HepG2 (cell line): ENCODE measurements at regions of chr15 and their contacts with region 1.

Region 1: DNA sequence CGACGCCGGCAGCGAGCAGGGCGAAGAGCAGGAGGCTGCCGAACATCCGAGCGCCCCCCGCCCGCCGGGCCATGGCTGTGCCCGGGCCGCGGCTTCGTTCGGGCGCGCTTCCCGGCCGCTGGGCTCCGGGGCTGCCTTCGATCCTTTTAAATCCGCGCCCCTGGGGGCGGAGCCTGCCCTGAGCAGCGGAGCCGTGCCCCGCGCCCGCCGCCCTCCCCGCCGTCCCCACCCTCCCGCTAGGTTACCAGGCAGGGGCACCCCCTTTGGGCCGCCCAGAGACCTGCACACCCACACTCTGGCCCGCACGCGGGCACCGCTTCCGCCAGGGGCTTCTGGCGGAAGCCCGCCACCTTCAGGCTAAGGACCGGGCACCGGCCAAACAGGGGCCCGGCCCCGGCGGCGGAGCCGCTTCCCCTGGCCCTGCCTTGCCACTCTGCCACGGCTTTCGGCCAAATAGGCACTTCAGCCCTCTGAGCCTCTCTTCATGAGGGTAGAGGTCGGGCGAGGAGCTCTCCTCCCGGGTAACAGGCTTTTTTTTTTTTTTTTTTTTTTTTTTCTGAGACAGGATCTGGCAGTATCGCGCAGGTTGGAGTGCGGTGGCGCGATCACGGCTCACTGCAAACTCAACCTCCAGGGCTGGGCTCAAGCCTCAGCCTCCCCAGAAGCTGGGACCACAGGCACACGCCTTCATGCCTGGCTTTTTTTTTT is at the start of gene NMB:
- DNase-seq: peak; percentile 81
- ATAC-seq: peak; percentile 85
- H3K4me3 ChIP-seq: peak within 1 kb of the TSS; percentile 52 to 75 (median 57)
- H3K27ac ChIP-seq: peak within 1 kb of the TSS; percentile 78
- H3K4me1 ChIP-seq: peaks cover 52% of the 10 kb centered on the region
- H3K27me3 ChIP-seq: no peaks in the 10 kb centered on the region; a peak in 1 of 5 replicates
- CTCF ChIP-seq: peak; percentile 80
- EP300 ChIP-seq: no peak
- POLR2A ChIP-seq: peak; percentile 54 to 67
- RAD21 ChIP-seq: peak; percentile 84
- total RNA-seq, gene NMB: 15.5 and 25.4 TPM in 2 replicates

Region 2: GRCh38 chr15:84600851-84601838 is 57.1 kb before region 1 on chr15 and contains the start of gene ZSCAN2:
- CTCF ChIA-PET with region 1: interaction called, 34 read pairs
- POLR2A ChIA-PET with region 1: interaction called, 27 read pairs
- in situ Hi-C with region 1: no loop called
- intact Hi-C with region 1: loop called (anchors 1 kb)
- DNase-seq: peak; percentile 91
- ATAC-seq: peak; percentile 96
- H3K4me3 ChIP-seq: peak within 1 kb of the TSS; percentile 78 to 98 (median 86)
- H3K27ac ChIP-seq: peak within 1 kb of the TSS; percentile 86
- H3K4me1 ChIP-seq: peaks cover 60% of the 10 kb centered on the region
- H3K27me3 ChIP-seq: no peaks in the 10 kb centered on the region; a peak in 1 of 5 replicates
- CTCF ChIP-seq: peak; percentile 22; the same call in 1 of the 2 replicates
- EP300 ChIP-seq: no peak
- POLR2A ChIP-seq: peak; percentile 70 to 79
- RAD21 ChIP-seq: peak; percentile 48
- total RNA-seq, gene ZSCAN2: 21.5 and 23.7 TPM in 2 replicates

Region 3: DNA sequence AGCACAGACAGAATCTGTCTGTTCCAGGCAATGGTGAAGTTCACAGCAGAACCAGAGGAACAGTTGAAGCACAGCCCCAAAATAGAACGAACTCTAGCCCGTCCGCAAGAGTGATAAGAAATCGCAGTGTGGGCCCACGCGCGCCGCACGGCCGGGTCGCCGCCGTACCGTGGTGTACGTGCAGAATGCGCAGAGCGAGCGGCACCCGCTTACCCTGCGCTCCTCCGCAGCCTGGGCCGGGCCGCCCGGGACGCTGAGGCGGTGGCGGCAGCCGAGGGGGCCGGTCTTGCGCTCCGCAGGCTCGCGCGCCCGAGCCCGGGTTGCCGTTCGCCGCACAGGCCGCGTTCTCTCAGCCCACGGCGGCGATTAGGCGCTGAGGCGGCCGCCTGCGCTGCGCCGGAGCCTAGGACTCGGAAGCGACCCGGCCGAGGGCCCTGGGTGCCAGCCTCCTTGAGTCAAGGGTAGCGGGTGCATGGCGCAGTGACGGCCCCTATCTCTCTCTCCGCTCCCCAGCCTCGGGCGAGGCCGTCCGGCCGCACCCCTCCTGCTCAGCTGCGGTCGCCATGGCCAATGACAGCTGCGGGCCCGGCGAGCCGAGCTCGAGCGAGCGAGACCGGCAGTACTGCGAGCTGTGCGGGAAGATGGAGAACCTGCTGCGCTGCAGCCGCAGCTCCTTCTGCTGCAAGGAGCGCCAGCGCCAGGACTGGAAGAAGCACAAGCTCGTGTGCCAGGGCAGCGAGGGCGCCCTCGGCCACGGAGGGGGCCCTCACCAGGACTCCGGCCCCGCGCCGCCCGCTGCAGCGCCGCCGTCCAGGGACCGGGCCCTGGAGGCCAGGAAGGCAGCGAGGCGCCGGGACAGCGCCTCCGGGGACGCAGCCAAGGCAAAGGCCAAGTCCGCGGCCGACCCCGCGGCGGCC is 24.7 kb before region 1 on chr15:
- CTCF ChIA-PET with region 1: no interaction called
- POLR2A ChIA-PET with region 1: interaction called, 47 read pairs
- in situ Hi-C with region 1: no loop called
- intact Hi-C with region 1: no loop called
- DNase-seq: peak; percentile 18
- ATAC-seq: peak; percentile 80
- H3K4me3 ChIP-seq: peak overlapping the region; percentile 67 to 83 (median 68)
- H3K27ac ChIP-seq: no peak overlapping the region
- H3K4me1 ChIP-seq: peaks cover 42% of the 10 kb centered on the region
- H3K27me3 ChIP-seq: no peaks in the 10 kb centered on the region; a peak in 1 of 5 replicates
- CTCF ChIP-seq: no peak; the same call in 1 of the 2 replicates
- EP300 ChIP-seq: no peak
- POLR2A ChIP-seq: no peak
- RAD21 ChIP-seq: peak; percentile 40; the same call in 1 of the 2 replicates

Region 4: GRCh38 chr15:84716036-84716799 is 58.0 kb after region 1 on chr15 and contains the start of gene SEC11A:
- CTCF ChIA-PET with region 1: no interaction called
- POLR2A ChIA-PET with region 1: interaction called, 6 read pairs
- in situ Hi-C with region 1: no loop called
- intact Hi-C with region 1: loop called (anchors 5 kb)
- DNase-seq: peak; percentile 90
- ATAC-seq: peak; percentile 98
- H3K4me3 ChIP-seq: peak within 1 kb of the TSS; percentile 72 to 89 (median 84)
- H3K27ac ChIP-seq: peak within 1 kb of the TSS; percentile 90
- H3K4me1 ChIP-seq: peaks cover 26% of the 10 kb centered on the region
- H3K27me3 ChIP-seq: no peaks in the 10 kb centered on the region; a peak in 1 of 5 replicates
- CTCF ChIP-seq: peak; percentile 23; the same call in 1 of the 2 replicates
- EP300 ChIP-seq: 0 out of 4 replicates have a peak, but pooled peaks of 1 of the 2 experiments have one; percentile 3
- POLR2A ChIP-seq: peak; percentile 79
- RAD21 ChIP-seq: peak; percentile 54; the same call in 1 of the 2 replicates
- total RNA-seq, gene SEC11A: 194 and 230 TPM in 2 replicates

Region 5: DNA sequence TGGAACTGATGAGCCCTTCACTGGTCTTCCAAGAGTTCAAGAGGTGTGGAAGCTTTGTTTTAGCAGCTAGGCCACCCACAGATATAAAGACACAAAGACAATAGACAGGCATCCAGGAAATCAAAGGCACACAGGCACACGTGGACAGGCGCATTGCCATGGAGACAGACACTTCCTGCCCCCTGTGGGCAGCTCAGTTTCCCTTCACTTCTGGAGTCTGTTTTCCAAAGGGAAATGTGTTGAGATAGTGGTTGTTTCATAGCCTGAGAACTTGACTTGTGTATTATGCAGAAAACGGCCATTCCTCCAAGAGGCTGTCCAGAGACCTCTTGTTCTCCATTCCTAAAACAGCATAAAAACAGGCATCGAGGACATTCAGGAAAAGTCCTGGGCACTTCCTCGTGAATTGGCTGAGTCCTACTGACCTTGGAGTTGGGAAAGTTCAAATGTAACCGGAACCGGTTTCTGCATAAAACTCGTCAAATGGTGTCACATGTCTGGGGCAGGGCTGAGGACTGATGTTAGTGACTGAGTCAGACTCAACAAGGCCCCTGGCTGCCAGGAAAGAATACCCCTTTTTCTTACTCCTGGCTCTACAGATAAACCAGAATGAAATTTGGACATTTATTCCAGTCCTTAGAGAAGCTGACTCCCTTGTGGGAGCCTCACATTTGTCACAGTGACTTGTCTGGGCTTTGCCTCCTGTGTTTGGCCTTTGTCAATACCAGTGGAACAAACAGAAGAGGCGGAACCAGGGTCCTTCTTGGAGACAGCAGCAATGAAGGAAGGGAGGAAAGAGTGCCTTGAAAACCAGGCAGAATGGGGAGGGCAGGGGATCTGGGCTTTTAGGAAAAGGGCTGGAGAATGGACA is 160.3 kb after region 1 on chr15:
- CTCF ChIA-PET with region 1: no interaction called
- POLR2A ChIA-PET with region 1: interaction called, 6 read pairs
- in situ Hi-C with region 1: no loop called
- intact Hi-C with region 1: loop called (anchors 10 kb)
- DNase-seq: peak; percentile 74
- ATAC-seq: peak; percentile 56
- H3K4me3 ChIP-seq: peak overlapping the region; percentile 2 to 45 (median 12); a peak in 4 of 6 replicates
- H3K27ac ChIP-seq: peak overlapping the region; percentile 28
- H3K4me1 ChIP-seq: peaks cover 59% of the 10 kb centered on the region
- H3K27me3 ChIP-seq: no peaks in the 10 kb centered on the region
- CTCF ChIP-seq: peak; percentile 34; the same call in 1 of the 2 replicates
- EP300 ChIP-seq: peak in 1 of 2 experiments; percentile 22; a peak in 1 of 4 replicates
- POLR2A ChIP-seq: no peak
- RAD21 ChIP-seq: no peak

Region 6: DNA sequence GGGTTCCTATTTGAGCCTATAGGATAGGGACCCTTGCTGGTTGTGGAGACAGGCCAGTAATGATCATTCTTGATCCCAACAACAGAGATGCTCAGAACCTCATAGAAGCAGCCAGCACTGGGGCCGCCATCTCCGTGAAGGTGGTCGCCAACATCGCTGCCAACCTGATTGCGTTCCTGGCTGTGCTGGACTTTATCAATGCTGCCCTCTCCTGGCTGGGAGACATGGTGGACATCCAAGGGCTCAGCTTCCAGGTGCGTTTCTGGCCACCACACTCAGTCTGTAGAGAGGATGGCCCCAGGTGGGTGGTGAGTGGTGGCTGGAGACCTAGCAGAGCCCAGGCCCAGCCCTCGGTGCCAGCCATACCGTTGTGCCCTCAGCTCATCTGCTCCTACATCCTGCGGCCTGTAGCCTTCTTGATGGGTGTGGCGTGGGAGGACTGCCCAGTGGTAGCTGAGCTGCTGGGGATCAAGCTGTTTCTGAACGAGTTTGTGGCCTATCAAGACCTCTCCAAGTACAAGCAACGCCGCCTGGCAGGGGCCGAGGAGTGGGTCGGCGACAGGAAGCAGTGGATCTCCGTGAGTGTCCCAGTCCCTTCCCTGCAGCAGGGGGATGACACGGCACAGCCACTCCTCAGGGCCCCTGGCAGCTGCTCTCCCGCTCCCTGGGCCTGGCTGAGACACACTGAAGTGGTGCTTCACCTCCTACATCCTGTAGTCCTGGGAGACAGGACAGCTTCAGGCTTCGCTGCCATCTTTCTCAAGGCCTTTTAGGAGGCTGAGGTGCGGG is 276.9 kb after region 1 on chr15:
- CTCF ChIA-PET with region 1: no interaction called
- POLR2A ChIA-PET with region 1: no interaction called
- in situ Hi-C with region 1: no loop called
- intact Hi-C with region 1: loop called (anchors 2 kb)
- DNase-seq: peak; percentile 31
- ATAC-seq: peak; percentile 91
- H3K4me3 ChIP-seq: no peak overlapping the region
- H3K27ac ChIP-seq: no peak overlapping the region
- H3K4me1 ChIP-seq: peaks cover 4% of the 10 kb centered on the region
- H3K27me3 ChIP-seq: no peaks in the 10 kb centered on the region
- CTCF ChIP-seq: peak; percentile 86
- EP300 ChIP-seq: no peak
- POLR2A ChIP-seq: no peak
- RAD21 ChIP-seq: peak; percentile 66